ENCODE measurements at regions of chr7 and their contacts with region 1.

Region 1: GRCh38 chr7:24199978-24200377 is 84.0 kb upstream of the NPY start:
- DNase-seq: no peak
- ATAC-seq: no peak
- H3K4me3 ChIP-seq: no peak overlapping the region
- H3K27ac ChIP-seq: no peak overlapping the region
- H3K4me1 ChIP-seq: no peaks in the 10 kb centered on the region
- H3K27me3 ChIP-seq: no peaks in the 10 kb centered on the region
- CTCF ChIP-seq: no peak
- POLR2A ChIP-seq: no peak
- RAD21 ChIP-seq: no peak

Region 2: DNA sequence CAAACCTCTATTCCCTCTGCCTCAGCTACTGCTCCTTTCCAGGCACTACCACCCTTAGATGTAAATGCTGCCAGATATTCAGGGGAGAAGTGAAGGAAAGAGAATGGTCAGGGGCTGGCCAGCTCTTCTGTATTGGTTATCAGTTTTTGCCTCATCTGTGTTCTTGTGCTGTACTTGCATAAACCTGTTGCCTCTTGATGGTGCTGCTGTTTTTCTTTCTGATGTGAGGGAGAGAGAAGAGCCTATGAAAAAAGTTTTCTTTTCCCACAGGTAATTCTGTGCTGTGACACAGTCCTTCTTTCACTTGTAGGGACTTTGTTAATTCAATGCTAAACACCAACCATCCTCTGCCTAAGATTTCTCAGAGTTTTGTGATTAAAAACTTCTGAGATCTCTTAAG is 432.5 kb before region 1 on chr7:
- CTCF ChIA-PET with region 1: no interaction called
- POLR2A ChIA-PET with region 1: no interaction called
- dilution Hi-C with region 1: no loop called
- in situ Hi-C with region 1: loop called (anchors 10 kb)
- intact Hi-C with region 1: no loop called
- DNase-seq: no peak
- ATAC-seq: no peak
- H3K4me3 ChIP-seq: no peak overlapping the region
- H3K27ac ChIP-seq: no peak overlapping the region
- H3K4me1 ChIP-seq: no peaks in the 10 kb centered on the region
- H3K27me3 ChIP-seq: peaks cover 2% of the 10 kb centered on the region; the same call in 1 of the 2 replicates
- CTCF ChIP-seq: no peak
- POLR2A ChIP-seq: no peak
- RAD21 ChIP-seq: no peak

Region 3: GRCh38 chr7:24135003-24135817 is 64.8 kb before region 1 on chr7:
- CTCF ChIA-PET with region 1: no interaction called
- POLR2A ChIA-PET with region 1: no interaction called
- dilution Hi-C with region 1: no loop called
- in situ Hi-C with region 1: no loop called
- intact Hi-C with region 1: loop called (anchors 10 kb)
- DNase-seq: no peak
- ATAC-seq: no peak
- H3K4me3 ChIP-seq: no peak overlapping the region
- H3K27ac ChIP-seq: no peak overlapping the region
- H3K4me1 ChIP-seq: no peaks in the 10 kb centered on the region
- H3K27me3 ChIP-seq: no peaks in the 10 kb centered on the region
- CTCF ChIP-seq: no peak
- POLR2A ChIP-seq: no peak
- RAD21 ChIP-seq: no peak